ENCODE measurements at regions of chr3 and their contacts with region 1.

Region 1: DNA sequence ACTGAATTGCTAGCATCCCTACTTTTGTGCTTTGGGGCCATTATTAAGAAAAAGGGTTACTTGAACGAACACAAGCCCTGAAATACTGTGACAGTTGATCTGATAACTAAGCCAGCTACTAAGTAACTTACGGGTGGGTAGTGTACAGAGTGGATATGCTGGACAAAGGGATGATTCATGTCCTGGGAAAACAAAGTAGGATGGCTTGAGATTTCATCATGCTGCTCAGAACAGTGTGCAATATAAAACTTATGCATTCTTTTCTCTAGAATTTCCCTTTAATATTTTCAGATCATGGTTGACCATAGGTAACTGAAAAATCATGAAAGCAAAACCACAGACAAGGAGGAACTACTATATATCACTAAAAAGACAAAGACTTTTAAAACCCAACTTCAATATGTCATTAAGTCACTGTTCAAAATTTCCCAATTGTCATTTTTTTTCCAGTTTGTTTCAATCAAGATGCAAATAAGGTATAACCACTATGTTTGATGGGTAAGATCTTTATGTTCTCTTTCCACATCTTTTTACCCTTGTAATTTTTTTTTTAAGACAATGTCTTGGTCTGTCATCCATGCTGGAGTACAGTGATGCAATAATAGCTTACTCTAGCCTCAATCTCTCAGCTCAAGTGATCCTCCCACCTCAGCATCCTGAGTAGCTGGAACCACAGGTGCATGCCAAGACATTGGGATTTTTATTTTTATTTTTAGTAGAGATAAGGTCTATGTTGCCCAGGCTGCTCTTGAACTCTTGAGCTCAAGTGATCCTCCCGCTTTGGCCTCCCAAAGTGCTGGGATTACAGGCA is 67.7 kb downstream of the IFT80 start:
- DNase-seq: peak; percentile 86
- ATAC-seq: peak; percentile 99
- H3K4me3 ChIP-seq: peak overlapping the region in 1 of 3 experiments; percentile 9; a peak in 1 of 6 replicates
- H3K27ac ChIP-seq: peak overlapping the region; percentile 36
- H3K4me1 ChIP-seq: peaks cover 29% of the 10 kb centered on the region
- H3K27me3 ChIP-seq: no peaks in the 10 kb centered on the region
- CTCF ChIP-seq: no peak
- EP300 ChIP-seq: peak in 1 of 2 experiments; percentile 73; a peak in 2 of 4 replicates
- POLR2A ChIP-seq: no peak
- RAD21 ChIP-seq: no peak

Region 2: DNA sequence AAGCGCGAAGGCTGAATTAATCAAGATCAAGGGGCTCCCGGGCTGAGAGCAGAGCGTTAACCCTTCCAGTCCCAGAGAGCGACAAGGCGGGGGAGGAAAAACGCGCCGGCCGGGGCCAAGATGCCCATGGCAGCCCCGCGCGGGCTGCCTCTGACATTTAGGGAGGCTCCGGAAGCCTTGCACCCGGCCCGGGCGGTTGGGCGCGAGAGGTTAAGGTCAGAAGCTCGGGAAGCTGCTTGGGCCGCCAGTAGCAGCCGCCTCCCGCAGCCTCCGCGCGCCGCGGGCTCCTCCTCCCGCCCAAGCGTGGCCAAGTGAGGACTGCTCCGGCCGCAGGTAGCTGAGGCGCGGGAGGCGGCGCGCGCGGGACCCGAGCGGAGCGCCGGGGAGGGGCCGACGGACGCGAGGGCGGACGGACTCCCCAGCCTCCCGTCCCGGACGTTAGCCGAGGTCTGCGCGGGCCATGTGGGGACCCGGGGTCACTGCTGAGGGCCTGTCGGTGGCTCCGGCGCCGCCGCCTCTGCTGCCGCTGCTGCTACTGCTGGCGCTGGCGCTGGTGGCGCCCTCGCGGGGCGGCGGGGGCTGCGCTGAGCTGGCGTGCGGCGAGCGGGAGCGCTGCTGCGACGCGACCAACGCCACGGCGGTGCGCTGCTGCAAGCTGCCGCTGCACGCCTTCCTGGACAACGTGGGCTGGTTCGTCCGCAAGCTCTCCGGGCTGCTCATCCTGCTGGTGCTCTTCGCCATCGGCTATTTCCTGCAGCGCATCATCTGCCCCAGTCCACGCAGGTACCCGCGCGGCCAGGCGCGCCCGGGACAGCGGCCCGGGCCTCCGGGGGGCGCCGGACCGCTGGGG is 105.9 kb before region 1 on chr3 and contains the start of gene C3orf80:
- CTCF ChIA-PET with region 1: no interaction called
- POLR2A ChIA-PET with region 1: no interaction called
- in situ Hi-C with region 1: no loop called
- intact Hi-C with region 1: loop called (anchors 5 kb)
- DNase-seq: peak; percentile 12
- ATAC-seq: peak; percentile 95
- H3K4me3 ChIP-seq: peak within 1 kb of the TSS; percentile 57 to 73 (median 59); a peak in 5 of 6 replicates
- H3K27ac ChIP-seq: no peak within 1 kb of the TSS
- H3K4me1 ChIP-seq: peaks cover 13% of the 10 kb centered on the region
- H3K27me3 ChIP-seq: peaks cover 8 to 33% of the 10 kb centered on the region in 2 experiments
- CTCF ChIP-seq: peak; percentile 47
- EP300 ChIP-seq: no peak
- POLR2A ChIP-seq: no peak
- RAD21 ChIP-seq: peak; percentile 38; the same call in 1 of the 2 replicates
- total RNA-seq, gene C3orf80: 0.04 TPM in 1 of 2 replicates, not detected in the other

Region 3: GRCh38 chr3:160291290-160291908 is 39.9 kb before region 1 on chr3:
- CTCF ChIA-PET with region 1: no interaction called
- POLR2A ChIA-PET with region 1: interaction called, 4 read pairs
- in situ Hi-C with region 1: no loop called
- intact Hi-C with region 1: loop called (anchors 2 kb)
- DNase-seq: peak; percentile 83
- ATAC-seq: peak; percentile 98
- H3K4me3 ChIP-seq: no peak overlapping the region
- H3K27ac ChIP-seq: peak overlapping the region; percentile 41
- H3K4me1 ChIP-seq: peaks cover 18% of the 10 kb centered on the region
- H3K27me3 ChIP-seq: no peaks in the 10 kb centered on the region
- CTCF ChIP-seq: no peak
- EP300 ChIP-seq: 0 out of 4 replicates have a peak, but pooled peaks of 1 of the 2 experiments have one; percentile 28
- POLR2A ChIP-seq: no peak
- RAD21 ChIP-seq: no peak

Region 4: GRCh38 chr3:160343132-160343531 is 11.8 kb after region 1 on chr3:
- CTCF ChIA-PET with region 1: no interaction called
- POLR2A ChIA-PET with region 1: no interaction called
- in situ Hi-C with region 1: no loop called
- intact Hi-C with region 1: no loop called
- DNase-seq: peak; percentile 16
- ATAC-seq: no peak
- H3K4me3 ChIP-seq: no peak overlapping the region
- H3K27ac ChIP-seq: no peak overlapping the region
- H3K4me1 ChIP-seq: no peaks in the 10 kb centered on the region
- H3K27me3 ChIP-seq: no peaks in the 10 kb centered on the region
- CTCF ChIP-seq: peak; percentile 41
- EP300 ChIP-seq: no peak
- POLR2A ChIP-seq: no peak
- RAD21 ChIP-seq: no peak

Region 5: GRCh38 chr3:160399125-160400029 is 68.0 kb after region 1 on chr3 and contains the starts of genes IFT80 and SMC4:
- CTCF ChIA-PET with region 1: no interaction called
- POLR2A ChIA-PET with region 1: no interaction called
- in situ Hi-C with region 1: no loop called
- intact Hi-C with region 1: loop called (anchors 2 kb)
- DNase-seq: peak; percentile 92
- ATAC-seq: peak; percentile 92
- H3K4me3 ChIP-seq: peak within 1 kb of the TSS; percentile 87 to 94 (median 94)
- H3K27ac ChIP-seq: peak within 1 kb of the TSS; percentile 98
- H3K4me1 ChIP-seq: peaks cover 27% of the 10 kb centered on the region
- H3K27me3 ChIP-seq: no peaks in the 10 kb centered on the region; a peak in 1 of 5 replicates
- CTCF ChIP-seq: no peak
- EP300 ChIP-seq: 0 out of 4 replicates have a peak, but pooled peaks of 1 of the 2 experiments have one; percentile 21
- POLR2A ChIP-seq: peak; percentile 80 to 92
- RAD21 ChIP-seq: no peak
- total RNA-seq, gene IFT80: 15.7 and 21.4 TPM in 2 replicates
- total RNA-seq, gene SMC4: 74.3 and 95.5 TPM in 2 replicates